PC-3 (cell line): ENCODE measurements at regions of chrX and their contacts with region 1.

Region 1: DNA sequence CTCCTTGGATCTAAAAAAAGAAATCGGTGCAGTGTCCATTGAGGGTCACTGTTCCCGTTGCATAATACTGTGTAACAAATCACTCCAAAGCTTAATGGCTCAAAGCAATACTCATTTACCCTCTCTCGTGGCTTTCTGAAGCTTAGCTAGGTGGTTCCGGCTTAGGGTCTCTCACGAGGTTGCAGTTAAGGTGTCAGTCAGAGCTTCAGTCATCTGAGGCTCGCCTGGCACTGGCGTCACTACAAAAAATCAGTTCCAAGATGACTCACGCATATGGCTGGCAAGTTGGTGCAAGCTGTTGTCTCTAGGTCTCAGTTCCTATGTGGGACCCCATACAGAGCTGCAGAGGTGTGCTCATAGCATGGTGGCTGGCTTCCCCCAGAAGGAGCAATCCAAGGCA is 91.0 kb downstream of the BEND2 start:
- DNase-seq: peak; percentile 10
- ATAC-seq: no peak
- H3K4me3 ChIP-seq: no peak overlapping the region
- H3K27ac ChIP-seq: no peak overlapping the region
- H3K4me1 ChIP-seq: no peaks in the 10 kb centered on the region
- H3K27me3 ChIP-seq: peaks cover 15% of the 10 kb centered on the region
- CTCF ChIP-seq: no peak

Region 2: GRCh38 chrX:16931371-16931770 is 1198.3 kb before region 1 on chrX:
- CTCF ChIA-PET with region 1: no interaction called
- POLR2A ChIA-PET with region 1: interaction called, 10 read pairs
- intact Hi-C with region 1: no loop called
- DNase-seq: no peak
- ATAC-seq: no peak
- H3K4me3 ChIP-seq: no peak overlapping the region
- H3K27ac ChIP-seq: no peak overlapping the region
- H3K4me1 ChIP-seq: no peaks in the 10 kb centered on the region
- H3K27me3 ChIP-seq: no peaks in the 10 kb centered on the region
- CTCF ChIP-seq: no peak

Region 3: DNA sequence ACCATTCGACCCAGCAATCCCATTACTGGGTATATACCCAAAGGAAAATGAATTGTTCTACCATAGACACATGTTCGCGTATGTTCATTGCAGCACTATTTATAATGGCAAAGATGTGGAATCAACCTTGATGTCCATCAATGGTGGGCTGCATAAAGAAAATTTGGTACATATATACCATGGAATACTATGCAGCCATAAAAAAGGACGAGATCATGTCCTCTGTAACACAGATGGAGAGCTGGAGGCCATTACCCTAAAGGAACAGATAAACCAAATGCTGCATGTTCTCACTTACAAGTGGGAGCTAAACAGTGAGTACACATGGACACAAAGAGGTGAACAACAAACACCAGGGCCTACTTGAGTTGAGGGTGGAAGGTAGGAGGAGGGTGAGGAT is 179.7 kb after region 1 on chrX:
- CTCF ChIA-PET with region 1: no interaction called
- POLR2A ChIA-PET with region 1: no interaction called
- intact Hi-C with region 1: no loop called
- DNase-seq: no peak
- ATAC-seq: no peak
- H3K4me3 ChIP-seq: no peak overlapping the region
- H3K27ac ChIP-seq: no peak overlapping the region
- H3K4me1 ChIP-seq: no peaks in the 10 kb centered on the region
- H3K27me3 ChIP-seq: no peaks in the 10 kb centered on the region
- CTCF ChIP-seq: no peak